Panc1 (cell line): ENCODE measurements at regions of chr1 and their contacts with region 1.

Region 1: DNA sequence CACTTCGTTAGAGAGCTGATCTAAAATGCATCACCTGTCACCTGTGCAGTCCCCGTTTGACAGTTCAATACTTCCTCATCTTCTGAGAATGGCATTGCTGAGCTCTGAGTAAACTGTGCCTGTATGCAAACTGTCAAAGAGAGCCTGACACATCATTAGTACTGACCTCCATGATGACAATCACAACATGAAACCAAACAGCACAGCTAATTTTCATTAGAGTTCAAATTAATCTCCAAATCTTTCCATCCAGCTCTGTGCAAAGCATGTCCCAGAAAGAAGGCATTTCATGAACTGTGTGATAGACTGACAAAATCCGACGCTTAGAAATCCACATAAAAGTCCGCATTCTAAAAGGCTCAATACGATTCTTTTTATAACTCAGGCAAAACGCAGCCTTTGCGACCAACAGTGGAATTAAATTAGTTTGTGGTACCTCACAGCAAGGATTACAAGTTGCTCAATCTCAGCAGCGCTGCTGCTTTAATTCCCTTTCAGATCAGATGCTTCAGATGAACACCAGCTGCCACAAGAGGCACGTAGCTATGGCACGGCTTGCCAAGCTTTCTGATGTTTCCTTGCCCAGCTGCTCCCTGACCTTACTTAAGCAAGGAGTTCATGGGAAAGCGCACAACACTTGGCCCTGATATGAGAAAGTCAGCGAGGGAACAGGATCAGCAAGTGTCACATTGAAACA is 765.5 kb upstream of the PRMT6 start:
- DNase-seq: no peak
- ATAC-seq: no peak
- H3K4me3 ChIP-seq: no peak overlapping the region
- H3K27ac ChIP-seq: no peak overlapping the region
- H3K4me1 ChIP-seq: no peaks in the 10 kb centered on the region
- H3K27me3 ChIP-seq: no peaks in the 10 kb centered on the region
- CTCF ChIP-seq: no peak

Region 2: DNA sequence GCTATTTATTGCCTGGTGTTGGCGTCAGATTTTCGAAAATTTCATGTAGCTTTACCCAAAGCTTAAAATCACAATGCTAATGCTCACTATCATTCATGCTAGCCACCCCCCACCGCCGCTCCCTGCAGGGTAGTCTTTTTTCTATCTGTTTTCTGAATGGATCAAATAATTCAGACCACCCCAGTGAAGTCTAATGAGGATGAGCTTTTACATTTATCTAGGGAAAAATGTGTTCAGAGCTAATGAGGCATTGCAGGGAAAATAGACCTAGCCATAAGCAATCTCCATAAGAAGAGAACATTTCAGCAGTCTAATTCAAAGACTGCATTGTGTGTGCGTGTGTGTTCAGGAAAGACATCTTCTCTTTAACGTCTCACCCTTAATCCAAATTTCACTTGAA is 232.5 kb after region 1 on chr1:
- CTCF ChIA-PET with region 1: no interaction called
- POLR2A ChIA-PET with region 1: no interaction called
- in situ Hi-C with region 1: no loop called
- intact Hi-C with region 1: no loop called
- DNase-seq: no peak
- ATAC-seq: no peak
- H3K4me3 ChIP-seq: no peak overlapping the region
- H3K27ac ChIP-seq: no peak overlapping the region
- H3K4me1 ChIP-seq: no peaks in the 10 kb centered on the region
- H3K27me3 ChIP-seq: no peaks in the 10 kb centered on the region
- CTCF ChIP-seq: no peak

Region 3: GRCh38 chr1:107142140-107142542 is 851.2 kb after region 1 on chr1:
- CTCF ChIA-PET with region 1: no interaction called
- POLR2A ChIA-PET with region 1: no interaction called
- in situ Hi-C with region 1: no loop called
- intact Hi-C with region 1: loop called (anchors 10 kb)
- DNase-seq: no peak
- ATAC-seq: peak; percentile 25; the same call in 1 of the 2 replicates
- H3K4me3 ChIP-seq: peak overlapping the region; percentile 34 to 55
- H3K27ac ChIP-seq: no peak overlapping the region
- H3K4me1 ChIP-seq: peaks cover 3% of the 10 kb centered on the region; the same call in 1 of the 2 replicates
- H3K27me3 ChIP-seq: no peaks in the 10 kb centered on the region
- CTCF ChIP-seq: peak; percentile 60; the same call in 1 of the 2 replicates